ENCODE measurements at regions of chr14 and their contacts with region 1.

Region 1: DNA sequence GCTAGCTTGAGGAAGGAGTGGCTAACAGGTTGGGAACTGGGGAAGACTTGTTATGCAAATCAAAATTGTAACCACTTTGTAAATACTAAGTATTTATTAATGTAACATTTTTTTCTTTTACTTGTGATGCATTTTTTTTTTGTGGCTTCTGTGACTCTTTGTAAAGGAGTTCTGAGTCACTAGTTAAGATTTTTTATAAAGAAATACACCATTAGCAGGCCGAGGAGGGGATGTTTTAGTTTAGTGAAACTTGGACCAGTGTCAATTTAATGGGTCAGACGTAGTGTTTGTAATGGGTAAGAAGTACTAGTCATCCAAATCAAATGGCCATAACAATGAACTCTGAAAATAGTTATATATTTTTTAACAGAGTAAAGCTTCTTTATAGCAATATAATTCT is 43.1 kb downstream of the AKAP6 start:
- DNase-seq: peak; percentile 87
- H3K4me3 ChIP-seq: no peak overlapping the region
- H3K27ac ChIP-seq: no peak overlapping the region
- H3K27me3 ChIP-seq: no peaks in the 10 kb centered on the region
- CTCF ChIP-seq: no peak

Region 2: GRCh38 chr14:31578266-31578665 is 793.9 kb before region 1 on chr14:
- CTCF ChIA-PET with region 1: no interaction called
- POLR2A ChIA-PET with region 1: interaction called, 16 read pairs
- DNase-seq: no peak
- H3K4me3 ChIP-seq: no peak overlapping the region
- H3K27ac ChIP-seq: no peak overlapping the region
- H3K27me3 ChIP-seq: no peaks in the 10 kb centered on the region
- CTCF ChIP-seq: no peak

Region 3: GRCh38 chr14:31657917-31658316 is 714.2 kb before region 1 on chr14:
- CTCF ChIA-PET with region 1: no interaction called
- POLR2A ChIA-PET with region 1: no interaction called
- DNase-seq: no peak
- H3K4me3 ChIP-seq: no peak overlapping the region
- H3K27ac ChIP-seq: no peak overlapping the region
- H3K27me3 ChIP-seq: no peaks in the 10 kb centered on the region
- CTCF ChIP-seq: no peak

Region 4: DNA sequence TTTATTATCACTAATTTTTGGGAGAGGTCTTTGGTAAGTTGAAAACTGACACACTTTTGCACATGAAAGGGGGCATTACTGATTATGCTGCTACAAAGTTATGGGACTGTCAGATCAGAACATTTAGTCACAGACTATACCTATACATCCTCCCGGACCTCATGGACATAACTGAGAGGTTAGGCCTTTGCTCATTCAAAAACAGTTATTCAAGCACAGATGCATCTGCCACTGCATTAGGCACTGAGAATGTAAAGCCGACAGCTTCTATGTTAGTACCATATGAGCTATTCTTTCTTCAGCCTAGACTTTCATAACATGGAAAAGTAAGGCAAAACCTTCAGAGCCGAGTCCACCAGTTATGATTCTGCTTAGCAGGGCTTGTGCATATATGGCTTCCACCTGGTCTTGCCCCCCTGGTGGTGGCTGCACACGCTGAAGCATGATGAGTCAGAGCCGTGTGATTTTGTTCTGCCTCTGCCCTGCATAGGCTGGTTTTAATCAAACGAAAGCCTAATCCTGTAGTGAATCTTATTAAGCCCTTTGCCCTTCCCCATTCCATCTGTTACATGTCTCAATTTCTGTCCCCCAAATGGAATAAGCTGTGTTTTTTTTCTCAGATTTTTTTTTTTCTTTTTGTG is 147.3 kb before region 1 on chr14:
- CTCF ChIA-PET with region 1: interaction called, 10 read pairs
- POLR2A ChIA-PET with region 1: no interaction called
- DNase-seq: no peak
- H3K4me3 ChIP-seq: no peak overlapping the region
- H3K27ac ChIP-seq: no peak overlapping the region
- H3K27me3 ChIP-seq: no peaks in the 10 kb centered on the region
- CTCF ChIP-seq: peak; percentile 64